ENCODE measurements at regions of chr6 and their contacts with region 1.

Region 1: DNA sequence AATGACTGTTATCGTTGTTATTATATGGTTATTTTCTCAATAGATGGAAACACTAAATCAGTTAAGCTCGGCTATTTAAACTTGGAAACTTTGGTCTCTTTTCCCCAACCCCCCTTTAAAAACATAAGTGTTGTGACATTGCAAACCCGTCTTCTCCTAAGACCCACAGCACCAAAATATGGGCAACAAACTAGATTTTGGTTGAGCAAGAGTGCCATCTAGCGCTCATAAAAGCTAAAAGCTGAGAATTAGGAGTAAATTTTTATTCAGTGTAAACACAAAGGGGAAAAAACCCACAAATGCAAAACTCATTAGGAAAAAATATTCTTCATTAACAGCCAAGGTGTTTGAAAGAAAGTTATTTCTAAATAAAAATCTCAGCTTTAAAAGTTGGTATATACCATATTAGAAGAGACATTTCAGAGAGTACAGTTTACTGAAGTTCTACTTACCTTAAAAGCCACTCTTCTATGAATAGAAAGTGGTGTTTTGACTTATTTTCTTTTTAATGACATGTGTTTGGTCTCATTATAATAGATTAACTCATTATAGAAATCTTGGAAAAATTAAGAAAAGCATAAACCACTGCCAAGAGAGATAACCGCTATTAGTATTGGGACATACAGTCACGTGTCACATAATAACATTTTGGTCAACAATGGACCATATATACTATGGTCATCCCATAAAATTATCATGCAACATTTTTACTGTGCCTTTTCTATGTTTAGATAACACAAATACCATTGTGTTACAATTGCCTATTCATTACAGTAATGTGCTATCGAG is 21.1 kb downstream of the SESN1 start:
- DNase-seq: no peak
- ATAC-seq: no peak
- H3K4me3 Mint-ChIP-seq: no peak overlapping the region
- H3K27ac Mint-ChIP-seq: no peak overlapping the region
- H3K4me1 Mint-ChIP-seq: peaks cover 5% of the 10 kb centered on the region
- H3K27me3 Mint-ChIP-seq: no peaks in the 10 kb centered on the region
- CTCF ChIP-seq: peak; percentile 89

Region 2: DNA sequence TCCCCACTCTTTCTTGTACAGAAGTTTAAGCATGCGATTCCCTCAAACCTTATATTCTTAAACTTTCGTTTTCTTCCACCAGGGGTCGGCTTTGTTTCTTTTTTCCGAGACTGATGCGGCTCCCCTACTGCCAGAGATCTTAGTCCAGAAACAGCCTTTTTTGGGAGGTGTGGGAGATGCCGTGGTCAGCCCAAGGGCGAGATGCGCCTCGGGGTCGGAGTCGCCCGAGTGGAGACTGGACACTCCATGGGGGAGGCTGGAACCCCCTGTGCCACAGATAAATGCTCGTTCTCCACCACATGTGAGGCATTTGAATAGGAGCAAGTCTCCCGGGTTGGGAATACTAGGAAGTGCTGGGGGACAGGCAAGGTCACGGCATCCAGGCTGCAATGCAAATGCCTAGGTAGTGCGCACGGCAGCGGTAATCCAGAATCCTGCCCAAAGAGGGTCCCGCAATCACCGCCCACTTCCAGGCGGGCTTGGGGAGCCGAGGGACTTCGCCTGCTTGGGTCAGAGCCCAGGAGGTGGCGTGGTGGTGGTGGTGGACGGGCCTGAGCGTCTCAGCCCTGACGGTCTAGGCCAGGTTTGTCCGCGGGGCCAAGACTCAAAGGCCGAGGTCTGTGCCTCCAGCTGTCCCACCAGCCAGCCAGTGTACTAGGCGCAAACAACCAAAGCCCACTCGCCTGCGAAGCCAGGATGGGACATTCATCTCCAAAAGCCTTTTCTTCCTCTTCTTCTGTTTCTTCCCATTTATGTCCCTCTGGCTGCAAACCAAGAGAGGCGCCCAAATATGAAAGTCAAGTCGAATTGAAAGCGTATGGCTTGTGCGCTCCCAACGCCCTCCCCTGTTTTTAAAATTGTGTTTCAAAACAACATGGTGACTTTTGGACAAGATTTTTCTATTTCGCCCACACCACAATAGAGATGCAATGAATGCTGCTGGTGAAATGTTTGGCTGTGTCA is 959.7 kb before region 1 on chr6:
- CTCF ChIA-PET with region 1: no interaction called
- POLR2A ChIA-PET with region 1: no interaction called
- intact Hi-C with region 1: loop called (anchors 5 kb)
- DNase-seq: peak; percentile 25
- ATAC-seq: no peak
- H3K4me3 Mint-ChIP-seq: peak overlapping the region; percentile 79
- H3K27ac Mint-ChIP-seq: no peak overlapping the region
- H3K4me1 Mint-ChIP-seq: peaks cover 47% of the 10 kb centered on the region
- H3K27me3 Mint-ChIP-seq: peaks cover 67% of the 10 kb centered on the region
- CTCF ChIP-seq: no peak

Region 3: GRCh38 chr6:108655806-108656651 is 417.5 kb before region 1 on chr6:
- CTCF ChIA-PET with region 1: no interaction called
- POLR2A ChIA-PET with region 1: no interaction called
- intact Hi-C with region 1: loop called (anchors 10 kb)
- DNase-seq: no peak
- ATAC-seq: no peak
- H3K4me3 Mint-ChIP-seq: no peak overlapping the region
- H3K27ac Mint-ChIP-seq: no peak overlapping the region
- H3K4me1 Mint-ChIP-seq: peaks cover 4% of the 10 kb centered on the region
- H3K27me3 Mint-ChIP-seq: no peaks in the 10 kb centered on the region
- CTCF ChIP-seq: no peak

Region 4: DNA sequence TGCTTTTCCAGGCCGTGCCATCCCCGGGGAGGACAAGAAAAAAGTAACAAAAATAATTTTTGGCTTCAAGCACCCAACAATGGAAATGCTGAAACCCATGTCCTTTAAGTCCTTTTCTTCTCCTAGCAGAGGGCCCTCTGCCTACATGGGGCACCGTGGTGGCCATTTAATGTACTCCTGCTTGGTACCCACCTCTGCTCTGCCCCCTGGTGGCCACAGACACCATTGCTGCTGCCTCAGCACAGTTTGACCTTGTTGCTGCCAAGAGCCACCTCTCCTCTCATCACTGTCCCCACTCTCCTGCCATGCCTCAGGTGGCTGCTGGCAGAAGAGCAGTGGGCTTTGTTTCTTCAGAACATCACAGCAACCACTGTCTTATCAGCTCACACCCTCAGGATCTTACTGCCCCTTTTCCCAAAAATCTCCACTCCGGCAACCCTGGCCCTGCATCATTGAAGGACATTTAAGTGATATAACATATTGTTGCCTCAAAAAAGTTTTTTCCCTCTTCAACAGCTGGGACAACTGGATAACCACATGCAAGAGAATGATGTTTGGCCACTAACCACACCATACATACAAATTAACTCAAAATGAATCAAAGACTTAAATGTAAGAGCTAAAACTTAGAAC is 238.2 kb before region 1 on chr6:
- CTCF ChIA-PET with region 1: interaction called, 14 read pairs
- POLR2A ChIA-PET with region 1: interaction called, 3 read pairs
- intact Hi-C with region 1: loop called (anchors 1 kb)
- DNase-seq: peak; percentile 72
- ATAC-seq: peak; percentile 95
- H3K4me3 Mint-ChIP-seq: no peak overlapping the region
- H3K27ac Mint-ChIP-seq: no peak overlapping the region
- H3K4me1 Mint-ChIP-seq: peaks cover 25% of the 10 kb centered on the region
- H3K27me3 Mint-ChIP-seq: peaks cover 8% of the 10 kb centered on the region
- CTCF ChIP-seq: no peak

Region 5: DNA sequence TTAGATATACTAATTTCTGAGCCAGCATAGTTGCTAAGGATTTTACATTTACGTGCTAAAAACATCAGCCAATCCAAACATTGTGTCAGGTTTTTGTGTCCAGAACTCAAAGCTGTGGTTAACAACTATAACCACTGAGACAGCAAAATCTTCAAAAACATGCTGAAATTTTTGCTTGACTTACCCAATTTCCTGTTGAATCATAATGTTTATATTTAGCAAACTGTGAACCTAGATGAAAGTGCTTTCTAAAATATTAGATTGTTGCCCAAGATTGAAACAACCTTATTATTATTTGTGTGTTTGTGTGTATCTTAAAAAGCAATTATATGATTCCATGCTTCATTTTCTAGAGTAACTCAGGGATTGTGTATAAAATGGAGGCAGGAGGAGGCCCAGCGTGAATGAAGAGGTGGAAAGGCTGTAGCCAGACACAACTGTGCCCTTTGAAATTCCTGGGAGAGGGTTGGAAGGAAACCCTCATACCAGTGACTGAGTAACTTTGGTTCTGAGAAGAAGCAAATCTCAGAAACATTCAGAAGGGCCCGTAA is 177.4 kb before region 1 on chr6:
- CTCF ChIA-PET with region 1: interaction called, 22 read pairs
- POLR2A ChIA-PET with region 1: no interaction called
- intact Hi-C with region 1: loop called (anchors 1 kb)
- DNase-seq: no peak
- ATAC-seq: no peak
- H3K4me3 Mint-ChIP-seq: no peak overlapping the region
- H3K27ac Mint-ChIP-seq: no peak overlapping the region
- H3K4me1 Mint-ChIP-seq: peaks cover 26% of the 10 kb centered on the region
- H3K27me3 Mint-ChIP-seq: no peaks in the 10 kb centered on the region
- CTCF ChIP-seq: no peak

Region 6: GRCh38 chr6:109031416-109031815 is 42.1 kb before region 1 on chr6:
- CTCF ChIA-PET with region 1: no interaction called
- POLR2A ChIA-PET with region 1: no interaction called
- intact Hi-C with region 1: no loop called
- DNase-seq: no peak
- ATAC-seq: no peak
- H3K4me3 Mint-ChIP-seq: no peak overlapping the region
- H3K27ac Mint-ChIP-seq: no peak overlapping the region
- H3K4me1 Mint-ChIP-seq: peaks cover 4% of the 10 kb centered on the region
- H3K27me3 Mint-ChIP-seq: no peaks in the 10 kb centered on the region
- CTCF ChIP-seq: no peak

Measured in activated B cell treated with CpG ODN at 0.5 μM for 24 hours (primary cell).